ENCODE measurements at regions of chr9 and their contacts with region 1.

Region 1: DNA sequence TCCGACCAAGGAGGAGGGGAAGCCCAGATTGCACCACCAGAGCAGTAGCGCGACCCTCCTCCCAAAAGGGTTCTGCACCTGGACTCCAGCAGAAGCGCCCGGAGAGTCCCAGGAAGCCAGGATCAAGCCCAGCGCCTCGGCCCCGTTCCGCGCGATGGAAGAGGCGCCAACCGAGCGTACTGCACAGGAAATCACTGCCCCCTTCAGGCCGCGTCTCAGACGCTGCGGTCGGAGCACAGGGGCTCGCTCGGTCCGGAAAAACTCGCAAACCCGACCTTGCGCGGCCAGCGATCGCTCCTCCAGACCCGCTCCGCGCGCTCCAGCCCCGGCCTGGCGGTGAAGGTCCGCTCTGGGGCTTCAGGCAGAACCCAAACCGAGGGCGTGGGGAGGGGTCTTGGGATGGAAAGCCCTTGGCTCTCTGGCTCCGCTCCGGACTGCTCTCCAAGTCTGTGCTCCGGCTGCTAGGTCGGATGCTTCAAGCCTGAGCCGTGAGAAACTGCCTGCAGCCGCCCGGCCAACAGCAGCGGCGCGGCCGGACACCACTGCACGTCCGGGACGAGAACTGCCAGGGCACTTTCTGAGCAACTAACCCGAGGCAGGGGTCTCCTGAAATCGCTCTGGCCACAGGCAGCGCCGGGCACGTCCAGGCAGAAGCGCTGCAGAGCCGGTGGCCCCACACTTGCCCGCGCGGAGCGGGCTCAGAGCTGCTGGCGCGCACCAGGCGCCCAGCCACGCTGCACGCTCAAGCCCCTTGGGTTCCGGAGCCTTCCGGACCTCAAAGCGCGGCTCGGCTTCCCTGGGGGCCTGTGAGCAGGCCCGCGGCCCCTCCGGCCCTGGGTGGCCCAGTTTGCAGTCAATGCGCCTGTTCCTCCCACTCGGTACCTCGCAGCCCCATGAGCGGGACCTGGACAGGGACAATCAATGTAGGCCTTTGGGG is 1.3 kb downstream of the GABBR2 start:
- DNase-seq: peak; percentile 88
- ATAC-seq: peak; percentile 82
- H3K4me3 Mint-ChIP-seq: peak overlapping the region; percentile 64
- H3K27ac Mint-ChIP-seq: no peak overlapping the region
- H3K4me1 Mint-ChIP-seq: peaks cover 8% of the 10 kb centered on the region
- H3K27me3 Mint-ChIP-seq: peaks cover 78% of the 10 kb centered on the region
- CTCF ChIP-seq: peak; percentile 39; the same call in 1 of the 2 replicates

Region 2: DNA sequence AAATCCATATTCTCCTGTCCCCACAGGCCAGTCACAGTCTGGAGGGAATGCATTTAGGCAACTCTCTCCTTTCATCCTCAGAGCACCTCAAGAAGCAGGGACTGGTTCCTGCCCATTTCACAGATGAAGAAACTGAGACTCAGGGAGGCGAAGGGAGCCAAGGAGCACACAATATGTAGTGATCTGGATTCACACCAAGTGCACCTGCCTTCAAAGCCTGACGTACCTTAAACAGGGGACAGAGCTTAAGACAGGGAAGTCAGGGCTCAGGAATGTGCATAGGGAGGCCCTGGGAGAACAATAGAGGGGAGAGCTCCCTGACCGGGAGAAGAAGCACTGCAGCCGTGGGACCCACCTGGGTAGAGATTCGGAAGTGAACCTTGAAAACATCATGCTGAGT is 81.7 kb before region 1 on chr9:
- CTCF ChIA-PET with region 1: no interaction called
- POLR2A ChIA-PET with region 1: no interaction called
- DNase-seq: peak; percentile 36
- ATAC-seq: peak; percentile 93
- H3K4me3 Mint-ChIP-seq: no peak overlapping the region
- H3K27ac Mint-ChIP-seq: no peak overlapping the region
- H3K4me1 Mint-ChIP-seq: peaks cover 8% of the 10 kb centered on the region
- H3K27me3 Mint-ChIP-seq: no peaks in the 10 kb centered on the region
- CTCF ChIP-seq: no peak

Region 3: GRCh38 chr9:98658951-98659351 is 48.5 kb before region 1 on chr9:
- CTCF ChIA-PET with region 1: no interaction called
- POLR2A ChIA-PET with region 1: no interaction called
- DNase-seq: no peak
- ATAC-seq: no peak
- H3K4me3 Mint-ChIP-seq: no peak overlapping the region
- H3K27ac Mint-ChIP-seq: no peak overlapping the region
- H3K4me1 Mint-ChIP-seq: no peaks in the 10 kb centered on the region
- H3K27me3 Mint-ChIP-seq: no peaks in the 10 kb centered on the region
- CTCF ChIP-seq: no peak

Region 4: DNA sequence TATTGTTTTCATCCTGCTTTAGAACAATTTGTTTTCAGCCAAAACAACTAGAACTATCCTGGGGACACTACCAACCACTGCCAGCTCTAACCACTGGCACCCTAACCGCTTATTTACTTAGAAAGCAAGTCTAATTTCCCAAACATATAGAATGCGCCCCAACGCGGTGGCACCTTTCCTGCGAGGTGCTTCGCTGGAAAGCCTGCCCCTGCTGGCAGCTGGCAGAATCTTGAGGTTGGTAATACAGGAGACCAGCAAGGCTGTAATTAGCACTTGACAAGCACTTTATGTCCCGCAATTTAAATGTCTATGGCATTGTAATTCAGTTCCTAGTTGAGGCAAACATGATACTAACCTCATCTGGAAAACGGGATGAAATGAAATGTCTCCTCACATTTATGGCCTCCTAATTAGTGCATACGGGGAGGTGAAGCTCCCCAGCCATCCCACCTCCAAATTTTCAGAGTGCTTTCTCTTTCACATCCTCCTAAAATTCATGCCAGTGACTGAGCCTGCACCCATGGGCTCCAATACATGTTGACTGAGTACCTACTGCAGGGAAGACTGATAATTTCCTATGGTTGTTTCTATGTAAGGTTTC is 29.1 kb before region 1 on chr9:
- CTCF ChIA-PET with region 1: interaction called, 13 read pairs
- POLR2A ChIA-PET with region 1: no interaction called
- DNase-seq: peak; percentile 66
- ATAC-seq: peak; percentile 94
- H3K4me3 Mint-ChIP-seq: peak overlapping the region; percentile 28; the same call in 1 of the 2 replicates
- H3K27ac Mint-ChIP-seq: no peak overlapping the region
- H3K4me1 Mint-ChIP-seq: peaks cover 26% of the 10 kb centered on the region
- H3K27me3 Mint-ChIP-seq: peaks cover 42% of the 10 kb centered on the region
- CTCF ChIP-seq: peak; percentile 26; the same call in 1 of the 2 replicates

Measured in WTC11 (cell line).